ENCODE measurements at regions of chr17 and their contacts with region 1.

Region 1: GRCh38 chr17:17943281-17943984 is 28.8 kb downstream of the TOM1L2 start:
- DNase-seq: no peak
- ATAC-seq: no peak; the same call in 2 of the 3 replicates
- H3K4me3 ChIP-seq: no peak overlapping the region
- H3K27ac ChIP-seq: no peak overlapping the region
- H3K4me1 ChIP-seq: peaks cover 5% of the 10 kb centered on the region; the same call in 1 of the 2 replicates
- H3K27me3 ChIP-seq: no peaks in the 10 kb centered on the region
- CTCF ChIP-seq: no peak
- EP300 ChIP-seq: no peak
- POLR2A ChIP-seq: no peak
- RAD21 ChIP-seq: no peak

Region 2: DNA sequence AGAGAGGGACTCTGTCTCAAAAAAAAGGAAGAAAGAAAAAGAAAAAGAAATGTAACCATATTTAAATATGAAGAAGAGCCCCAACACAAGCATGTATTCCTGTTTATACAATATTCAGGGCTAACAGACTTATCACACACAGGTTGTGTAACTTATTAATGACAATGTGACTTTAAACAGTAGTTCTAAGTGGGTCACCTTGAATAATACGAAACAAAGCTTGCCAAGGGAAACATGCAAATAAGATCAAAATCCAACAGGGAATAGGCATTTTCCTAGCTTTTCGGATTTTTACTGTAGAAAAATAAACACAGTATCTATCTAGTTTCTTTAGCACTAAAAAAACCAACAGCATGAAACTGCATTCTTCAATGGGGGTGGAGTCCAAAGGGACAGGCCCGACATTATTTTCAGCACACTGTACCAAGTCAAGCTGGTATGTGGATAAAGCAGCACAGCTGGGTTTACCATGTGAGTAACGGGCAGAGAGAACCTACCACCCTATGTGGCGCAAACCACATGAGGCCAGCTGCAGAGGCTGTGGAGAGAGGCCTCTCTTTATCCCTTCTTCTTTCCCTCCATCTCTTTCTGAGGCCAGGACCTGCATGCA is 16.5 kb before region 1 on chr17:
- CTCF ChIA-PET with region 1: interaction called, 5 read pairs
- POLR2A ChIA-PET with region 1: no interaction called
- RAD21 ChIA-PET with region 1: interaction called, 6 read pairs
- SMC1A ChIA-PET with region 1: interaction called, 10 read pairs
- in situ Hi-C with region 1: no loop called
- intact Hi-C with region 1: no loop called
- DNase-seq: no peak
- ATAC-seq: no peak
- H3K4me3 ChIP-seq: no peak overlapping the region
- H3K27ac ChIP-seq: no peak overlapping the region
- H3K4me1 ChIP-seq: no peaks in the 10 kb centered on the region
- H3K27me3 ChIP-seq: no peaks in the 10 kb centered on the region
- CTCF ChIP-seq: no peak
- EP300 ChIP-seq: no peak
- POLR2A ChIP-seq: no peak
- RAD21 ChIP-seq: no peak